ENCODE measurements at regions of chr5 and their contacts with region 1.

Region 1: GRCh38 chr5:147223948-147224791 is 10.7 kb upstream of the STK32A start:
- DNase-seq: peak; percentile 62
- H3K4me3 ChIP-seq: no peak overlapping the region
- H3K27ac ChIP-seq: no peak overlapping the region
- H3K4me1 ChIP-seq: no peaks in the 10 kb centered on the region
- H3K27me3 ChIP-seq: no peaks in the 10 kb centered on the region
- CTCF ChIP-seq: peak; percentile 58 to 67 (median 60)
- POLR2A ChIP-seq: no peak

Region 2: GRCh38 chr5:147391781-147392180 is 167.6 kb after region 1 on chr5:
- intact Hi-C with region 1: loop called (anchors 10 kb)
- DNase-seq: peak; percentile 74
- H3K4me3 ChIP-seq: no peak overlapping the region
- H3K27ac ChIP-seq: no peak overlapping the region
- H3K4me1 ChIP-seq: no peaks in the 10 kb centered on the region
- H3K27me3 ChIP-seq: no peaks in the 10 kb centered on the region
- CTCF ChIP-seq: peak in 2 of 3 experiments; percentile 49 to 64
- POLR2A ChIP-seq: no peak

Region 3: GRCh38 chr5:147573211-147573610 is 349.0 kb after region 1 on chr5:
- intact Hi-C with region 1: loop called (anchors 5 kb)
- DNase-seq: no peak
- H3K4me3 ChIP-seq: no peak overlapping the region
- H3K27ac ChIP-seq: no peak overlapping the region
- H3K4me1 ChIP-seq: peaks cover 7% of the 10 kb centered on the region
- H3K27me3 ChIP-seq: no peaks in the 10 kb centered on the region
- CTCF ChIP-seq: no peak
- POLR2A ChIP-seq: no peak

Region 4: DNA sequence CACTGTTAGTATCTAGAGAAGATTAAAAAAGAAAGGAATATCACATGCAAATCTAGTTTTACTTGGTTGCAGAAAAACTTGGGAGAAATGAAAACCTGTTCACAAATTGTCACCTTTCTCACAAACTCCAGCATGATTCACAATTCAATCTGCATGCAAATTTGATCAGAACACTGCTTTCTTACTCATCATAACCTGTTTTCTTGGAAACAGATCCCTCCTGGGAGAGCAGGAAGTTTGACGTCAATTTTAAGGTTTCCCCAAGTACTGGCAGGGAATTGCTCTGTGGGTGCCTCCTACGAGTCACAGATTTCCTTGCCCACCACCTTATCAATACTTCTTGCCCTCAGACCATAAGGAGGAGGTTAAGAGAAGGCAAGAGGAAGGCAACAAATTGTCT is 1460.4 kb after region 1 on chr5:
- intact Hi-C with region 1: no loop called
- DNase-seq: no peak
- H3K4me3 ChIP-seq: no peak overlapping the region
- H3K27ac ChIP-seq: no peak overlapping the region
- H3K4me1 ChIP-seq: no peaks in the 10 kb centered on the region
- H3K27me3 ChIP-seq: no peaks in the 10 kb centered on the region
- CTCF ChIP-seq: no peak
- POLR2A ChIP-seq: no peak

Measured in testis (tissue), 5 donors.